Caco-2 (cell line): ENCODE measurements at regions of chr11 and their contacts with region 1.

Region 1: GRCh38 chr11:75248690-75249268 is 8.2 kb downstream of the TPBGL start:
- DNase-seq: peak; percentile 93 to 95
- H3K4me3 ChIP-seq: no peak overlapping the region
- H3K4me3 Mint-ChIP-seq: no peak overlapping the region
- H3K27ac Mint-ChIP-seq: no peak overlapping the region
- H3K4me1 ChIP-seq: no peaks in the 10 kb centered on the region
- H3K4me1 Mint-ChIP-seq: no peaks in the 10 kb centered on the region
- H3K27me3 ChIP-seq: no peaks in the 10 kb centered on the region
- H3K27me3 Mint-ChIP-seq: peaks cover 9% of the 10 kb centered on the region
- CTCF ChIP-seq: peak; percentile 100

Region 2: DNA sequence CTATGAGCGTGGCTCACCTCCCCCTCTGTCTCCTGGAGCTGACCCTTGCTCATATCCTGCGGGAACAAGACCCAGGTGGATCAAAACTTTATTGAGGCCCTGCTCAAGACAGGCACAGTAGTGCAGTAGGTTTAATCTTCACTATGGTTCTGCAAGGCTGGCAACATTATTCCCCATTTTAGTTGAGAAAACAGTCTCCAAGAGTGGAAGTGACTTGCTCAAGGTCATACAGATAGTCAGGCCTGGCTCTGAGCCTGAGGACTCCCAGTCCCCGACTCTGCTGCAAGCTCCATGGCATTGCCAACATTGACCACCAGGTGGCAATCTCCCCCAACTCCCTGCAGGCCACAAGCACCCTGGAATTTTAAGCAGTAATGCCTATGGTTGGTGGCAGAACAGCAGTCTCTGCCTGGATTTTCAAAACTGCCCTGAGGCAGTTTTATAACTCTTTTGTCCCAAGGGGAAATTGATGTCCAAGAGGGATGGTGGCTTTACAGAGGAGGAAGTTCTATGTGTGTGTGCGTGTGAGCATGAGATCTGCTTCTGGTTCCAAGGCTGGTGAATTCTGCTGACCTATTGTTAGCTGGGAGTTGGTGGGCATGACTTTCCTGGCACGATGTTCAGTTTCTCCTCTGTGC is 225.9 kb before region 1 on chr11:
- CTCF ChIA-PET with region 1: interaction called, 73 read pairs
- POLR2A ChIA-PET with region 1: no interaction called
- intact Hi-C with region 1: loop called (anchors 1 kb)
- DNase-seq: peak; percentile 89 to 93
- H3K4me3 ChIP-seq: no peak overlapping the region
- H3K4me3 Mint-ChIP-seq: no peak overlapping the region
- H3K27ac Mint-ChIP-seq: no peak overlapping the region
- H3K4me1 ChIP-seq: no peaks in the 10 kb centered on the region
- H3K4me1 Mint-ChIP-seq: no peaks in the 10 kb centered on the region
- H3K27me3 ChIP-seq: no peaks in the 10 kb centered on the region
- H3K27me3 Mint-ChIP-seq: no peaks in the 10 kb centered on the region
- CTCF ChIP-seq: peak; percentile 99 to 100

Region 3: GRCh38 chr11:75160192-75160757 is 88.5 kb before region 1 on chr11:
- CTCF ChIA-PET with region 1: interaction called, 11 read pairs
- POLR2A ChIA-PET with region 1: no interaction called
- intact Hi-C with region 1: no loop called
- DNase-seq: peak; percentile 61 to 75
- H3K4me3 ChIP-seq: peak overlapping the region; percentile 39
- H3K4me3 Mint-ChIP-seq: peak overlapping the region; percentile 84
- H3K27ac Mint-ChIP-seq: peak overlapping the region; percentile 97
- H3K4me1 ChIP-seq: peaks cover 98% of the 10 kb centered on the region
- H3K4me1 Mint-ChIP-seq: peaks cover 74% of the 10 kb centered on the region
- H3K27me3 ChIP-seq: no peaks in the 10 kb centered on the region
- H3K27me3 Mint-ChIP-seq: no peaks in the 10 kb centered on the region
- CTCF ChIP-seq: no peak

Region 4: GRCh38 chr11:75214411-75214821 is 34.4 kb before region 1 on chr11:
- CTCF ChIA-PET with region 1: interaction called, 58 read pairs
- POLR2A ChIA-PET with region 1: no interaction called
- intact Hi-C with region 1: loop called (anchors 1 kb)
- DNase-seq: peak; percentile 95 to 97
- H3K4me3 ChIP-seq: no peak overlapping the region
- H3K4me3 Mint-ChIP-seq: no peak overlapping the region
- H3K27ac Mint-ChIP-seq: no peak overlapping the region
- H3K4me1 ChIP-seq: no peaks in the 10 kb centered on the region
- H3K4me1 Mint-ChIP-seq: no peaks in the 10 kb centered on the region
- H3K27me3 ChIP-seq: no peaks in the 10 kb centered on the region
- H3K27me3 Mint-ChIP-seq: peaks cover 23% of the 10 kb centered on the region
- CTCF ChIP-seq: peak; percentile 78 to 95

Region 5: DNA sequence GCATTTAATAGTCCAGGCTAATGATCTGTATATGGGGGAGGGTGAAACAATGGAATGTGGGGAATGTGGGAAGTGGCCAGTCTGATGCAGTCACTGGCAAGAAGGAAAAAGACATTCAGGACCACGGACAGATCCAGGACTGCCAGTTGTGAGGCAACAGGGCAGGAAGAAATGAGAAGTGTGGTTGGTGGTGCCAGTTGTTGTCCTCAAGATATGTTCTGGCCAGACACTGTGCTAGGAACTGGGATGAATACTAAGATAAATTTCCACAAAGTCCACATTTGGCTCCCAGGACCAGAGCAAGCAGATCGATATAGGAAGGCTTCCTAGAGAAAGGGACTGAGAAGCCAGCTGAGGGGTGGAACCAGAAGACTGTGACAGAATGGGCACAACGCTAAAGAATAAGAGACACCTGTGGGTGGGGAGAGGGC is 15.0 kb before region 1 on chr11:
- CTCF ChIA-PET with region 1: interaction called, 15 read pairs
- POLR2A ChIA-PET with region 1: no interaction called
- intact Hi-C with region 1: loop called (anchors 1 kb)
- DNase-seq: peak; percentile 77 to 92
- H3K4me3 ChIP-seq: no peak overlapping the region
- H3K4me3 Mint-ChIP-seq: no peak overlapping the region
- H3K27ac Mint-ChIP-seq: no peak overlapping the region
- H3K4me1 ChIP-seq: no peaks in the 10 kb centered on the region
- H3K4me1 Mint-ChIP-seq: no peaks in the 10 kb centered on the region
- H3K27me3 ChIP-seq: no peaks in the 10 kb centered on the region; the same call in none of the 2 replicates
- H3K27me3 Mint-ChIP-seq: peaks cover 16% of the 10 kb centered on the region
- CTCF ChIP-seq: no peak